Panc1 (cell line): ENCODE measurements at regions of chr2 and their contacts with region 1.

Region 1: GRCh38 chr2:36672199-36672598 is 24.3 kb upstream of the VIT start:
- DNase-seq: no peak
- ATAC-seq: peak; percentile 78; the same call in 1 of the 2 replicates
- H3K4me3 ChIP-seq: no peak overlapping the region
- H3K27ac ChIP-seq: no peak overlapping the region; the same call in 1 of the 2 replicates
- H3K4me1 ChIP-seq: peaks cover 17% of the 10 kb centered on the region
- H3K27me3 ChIP-seq: no peaks in the 10 kb centered on the region
- CTCF ChIP-seq: peak; percentile 79; the same call in 1 of the 2 replicates

Region 2: GRCh38 chr2:35871672-35872071 is 800.5 kb before region 1 on chr2:
- CTCF ChIA-PET with region 1: no interaction called
- POLR2A ChIA-PET with region 1: no interaction called
- in situ Hi-C with region 1: no loop called
- intact Hi-C with region 1: loop called (anchors 5 kb)
- DNase-seq: no peak
- ATAC-seq: peak; percentile 89
- H3K4me3 ChIP-seq: no peak overlapping the region
- H3K27ac ChIP-seq: no peak overlapping the region
- H3K4me1 ChIP-seq: no peaks in the 10 kb centered on the region
- H3K27me3 ChIP-seq: no peaks in the 10 kb centered on the region
- CTCF ChIP-seq: peak; percentile 88

Region 3: GRCh38 chr2:36068086-36068485 is 604.1 kb before region 1 on chr2:
- CTCF ChIA-PET with region 1: no interaction called
- POLR2A ChIA-PET with region 1: no interaction called
- in situ Hi-C with region 1: no loop called
- intact Hi-C with region 1: no loop called
- DNase-seq: no peak
- ATAC-seq: no peak
- H3K4me3 ChIP-seq: no peak overlapping the region
- H3K27ac ChIP-seq: no peak overlapping the region
- H3K4me1 ChIP-seq: no peaks in the 10 kb centered on the region
- H3K27me3 ChIP-seq: no peaks in the 10 kb centered on the region
- CTCF ChIP-seq: no peak